Sigmoid colon (tissue), 7 donors: ENCODE measurements at regions of chr2 and their contacts with region 1.

Region 1: DNA sequence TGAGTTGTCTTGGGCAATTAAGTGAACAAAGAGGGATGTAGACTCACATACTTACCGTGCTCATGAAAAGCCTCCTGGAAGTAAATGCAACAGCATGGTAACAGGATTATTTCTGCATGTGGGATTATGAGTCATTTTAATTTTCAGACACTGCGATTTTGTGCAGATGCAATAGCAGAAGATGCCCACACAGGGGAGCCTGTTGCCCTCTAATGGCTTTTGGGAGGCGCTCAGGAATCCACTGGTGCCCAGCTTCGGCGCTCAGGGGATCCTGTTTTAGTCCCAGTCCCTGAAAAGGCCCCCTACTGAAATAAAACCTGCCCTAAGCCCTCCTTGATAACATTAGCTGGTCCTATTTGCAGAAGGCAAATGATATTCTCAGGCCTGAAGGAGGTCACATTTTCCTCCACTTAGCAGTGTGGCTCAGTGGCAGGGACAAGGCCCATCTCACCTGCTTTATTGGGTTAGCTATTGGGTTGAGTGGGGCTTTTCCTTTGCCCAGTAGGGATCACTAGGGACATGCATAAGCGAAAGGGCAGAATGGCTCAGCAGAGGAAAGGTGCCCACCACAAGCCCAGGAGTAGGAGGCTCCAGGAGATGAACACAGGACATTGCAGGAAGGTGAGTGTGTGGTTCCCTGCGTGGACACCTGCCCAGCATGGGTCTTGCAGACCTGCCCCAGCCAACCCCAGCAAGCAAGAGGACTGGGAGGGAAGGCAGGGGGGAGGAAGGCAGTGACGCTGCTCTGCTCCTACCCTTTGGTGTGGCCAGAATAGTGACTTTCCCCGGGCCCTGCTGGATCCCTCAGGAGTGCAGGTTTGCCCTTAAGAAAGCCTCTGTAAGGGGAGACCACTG is 26.5 kb upstream of the KCNS3 start:
- DNase-seq: peak; percentile 71
- H3K4me3 ChIP-seq: no peak overlapping the region
- H3K27ac ChIP-seq: no peak overlapping the region
- H3K4me1 ChIP-seq: no peaks in the 10 kb centered on the region
- H3K27me3 ChIP-seq: no peaks in the 10 kb centered on the region
- CTCF ChIP-seq: peak; percentile 64 to 94 (median 80)
- EP300 ChIP-seq: peak in 1 of 4 donors; percentile 6
- POLR2A ChIP-seq: no peak

Region 2: DNA sequence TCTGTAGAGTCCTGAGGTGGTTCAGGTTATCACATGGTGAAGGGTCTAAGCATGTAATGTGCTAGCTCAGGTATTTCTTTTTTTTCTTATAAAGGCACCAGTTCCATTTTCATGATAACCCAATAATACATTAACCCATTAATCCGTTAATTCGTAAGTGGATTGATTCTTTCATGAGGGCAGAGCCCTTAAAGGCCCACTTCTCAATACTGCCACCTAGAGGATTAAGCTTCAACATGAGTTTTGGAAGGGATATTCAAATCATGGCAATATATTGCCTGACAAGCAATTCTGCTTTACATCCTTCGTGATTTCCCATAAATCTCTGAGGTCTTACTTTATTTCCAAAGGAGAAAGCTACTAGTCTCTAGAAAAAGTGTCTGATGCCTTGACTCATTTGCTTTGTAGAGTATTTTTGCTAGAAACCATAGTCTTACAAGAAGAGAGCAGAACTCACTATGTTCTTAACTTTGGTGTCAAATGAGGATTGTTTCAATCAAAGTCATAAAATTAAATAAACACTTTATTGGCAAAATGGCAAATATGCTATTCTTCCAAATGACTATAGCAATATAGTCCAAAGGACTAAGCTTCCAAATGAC is 297.8 kb after region 1 on chr2:
- intact Hi-C with region 1: loop called (anchors 1 kb)
- DNase-seq: no peak
- H3K4me3 ChIP-seq: no peak overlapping the region
- H3K27ac ChIP-seq: no peak overlapping the region
- H3K4me1 ChIP-seq: no peaks in the 10 kb centered on the region
- H3K27me3 ChIP-seq: no peaks in the 10 kb centered on the region
- CTCF ChIP-seq: peak in 3 of 4 experiments; percentile 49 to 85 (median 49)
- EP300 ChIP-seq: no peak
- POLR2A ChIP-seq: no peak

Region 3: GRCh38 chr2:18178736-18179349 is 326.9 kb after region 1 on chr2:
- intact Hi-C with region 1: loop called (anchors 1 kb)
- DNase-seq: no peak
- H3K4me3 ChIP-seq: no peak overlapping the region
- H3K27ac ChIP-seq: no peak overlapping the region
- H3K4me1 ChIP-seq: no peaks in the 10 kb centered on the region
- H3K27me3 ChIP-seq: peaks cover 0 to 5% (median 0%) of the 10 kb centered on the region in 3 donors
- CTCF ChIP-seq: peak; percentile 22 to 79 (median 50)
- EP300 ChIP-seq: no peak
- POLR2A ChIP-seq: no peak